ENCODE measurements at regions of chr9 and their contacts with region 1.

Region 1: DNA sequence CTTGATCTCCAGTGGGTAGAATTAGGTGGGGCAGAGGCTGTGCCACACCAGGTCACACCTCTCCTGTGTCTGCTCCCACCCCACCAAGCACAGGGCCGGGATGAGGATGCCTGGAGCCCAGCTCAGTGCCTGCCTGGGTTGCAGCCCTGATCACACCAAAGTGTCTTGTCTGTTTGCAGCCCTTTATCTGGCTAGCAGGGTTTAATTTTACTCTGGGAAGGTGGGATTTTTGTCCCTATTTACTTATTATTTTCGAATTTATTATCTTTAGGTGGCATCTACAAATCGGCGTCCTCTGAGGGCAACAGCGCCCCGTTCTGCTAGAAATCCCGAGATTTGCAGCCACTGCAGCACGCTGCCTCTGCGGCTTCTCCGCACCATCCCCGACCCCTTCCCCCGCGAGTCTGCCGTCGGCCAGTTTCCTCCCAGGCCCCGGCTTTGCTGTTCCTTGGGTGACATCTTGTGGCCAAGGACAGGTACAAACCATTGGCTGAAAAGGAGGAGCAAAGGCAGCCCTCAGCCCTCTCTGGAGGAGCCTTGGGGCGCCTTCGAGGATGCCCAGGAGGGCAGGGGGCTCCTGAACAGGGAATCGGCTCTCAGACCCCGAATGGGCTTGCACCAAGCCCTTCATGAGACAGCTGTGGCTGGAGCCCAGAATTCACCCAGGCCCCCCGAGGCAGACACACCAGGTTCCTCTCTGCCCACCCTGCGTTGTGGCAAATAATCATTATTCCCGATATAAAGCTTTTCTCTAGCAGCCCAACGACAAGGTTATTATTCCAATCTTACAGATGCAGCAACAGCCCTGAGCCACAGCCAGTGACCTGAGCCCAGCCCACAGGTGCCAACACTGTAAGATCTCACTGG is 113.0 kb downstream of the GAPVD1 start:
- DNase-seq: peak; percentile 88
- CTCF ChIP-seq: peak; percentile 83

Region 2: DNA sequence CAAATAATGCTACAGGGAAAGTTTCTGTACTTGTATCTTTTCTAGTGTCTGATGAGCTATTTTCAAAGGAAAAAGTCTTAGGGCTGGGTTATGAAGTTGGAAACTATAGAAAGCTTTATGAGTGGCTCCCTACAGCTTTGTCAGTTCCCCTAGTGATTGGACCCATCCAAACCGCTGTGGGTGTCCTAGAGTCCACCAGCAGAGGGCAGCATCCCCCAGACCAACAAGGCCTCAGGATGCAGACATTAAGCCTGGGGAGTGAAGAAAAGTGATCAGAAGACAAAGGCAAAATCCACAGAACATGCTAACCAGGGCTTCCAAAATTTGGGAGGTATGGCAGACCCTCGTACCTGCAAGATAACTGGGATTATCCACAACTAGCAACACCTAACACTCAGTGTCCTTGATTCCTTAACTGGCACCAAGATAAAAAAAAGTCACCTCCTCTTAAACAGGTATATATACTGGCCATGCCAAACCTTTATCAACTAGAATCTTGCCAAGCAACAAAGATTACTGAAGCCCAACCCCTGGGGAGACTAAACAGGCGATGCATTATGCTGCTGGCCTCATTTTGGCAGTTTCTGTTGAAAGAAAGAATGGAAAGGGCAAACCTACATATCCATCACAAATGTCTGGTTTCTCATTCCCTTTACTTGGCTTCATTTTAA is 757.1 kb before region 1 on chr9:
- in situ Hi-C with region 1: loop called (anchors 10 kb)
- DNase-seq: peak; percentile 65
- CTCF ChIP-seq: peak; percentile 94

Region 3: DNA sequence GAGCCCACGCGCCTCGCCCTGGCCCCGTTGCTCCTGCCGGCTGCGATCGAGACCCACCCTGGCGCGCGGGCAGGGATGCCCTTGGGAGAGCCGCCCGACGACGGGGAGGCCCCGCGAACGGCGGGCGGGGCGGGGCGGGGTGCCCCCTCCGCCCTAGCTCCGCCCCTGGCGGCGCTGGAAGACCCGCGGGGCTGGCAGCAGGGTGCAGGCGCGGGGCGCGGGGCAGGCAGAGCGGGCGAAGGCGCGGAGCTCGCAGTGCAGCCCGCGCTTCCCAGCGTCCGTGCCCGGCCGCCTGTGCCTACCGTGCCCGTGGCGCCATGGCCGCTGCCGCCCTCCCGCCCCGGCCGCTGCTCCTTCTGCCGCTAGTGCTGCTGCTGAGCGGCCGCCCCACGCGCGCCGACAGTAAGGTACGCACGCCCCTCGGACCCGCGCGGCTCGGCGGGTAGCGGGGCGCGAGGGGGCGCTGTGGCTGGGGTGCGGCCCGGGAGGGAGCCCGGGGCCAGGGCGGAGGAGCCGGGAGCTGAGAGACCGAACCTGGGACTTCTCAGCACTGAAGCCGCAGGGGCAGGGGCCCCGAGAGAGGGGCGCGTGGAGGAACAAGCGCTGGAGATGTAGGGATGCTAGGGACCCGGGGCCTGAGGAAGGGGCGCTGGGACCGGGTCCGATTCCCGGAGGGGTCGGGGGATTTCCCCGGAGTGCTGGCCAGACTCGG is 597.6 kb before region 1 on chr9 and contains the start of gene OLFML2A:
- in situ Hi-C with region 1: loop called (anchors 25 kb)
- DNase-seq: peak; percentile 68
- CTCF ChIP-seq: peak; percentile 64

Region 4: DNA sequence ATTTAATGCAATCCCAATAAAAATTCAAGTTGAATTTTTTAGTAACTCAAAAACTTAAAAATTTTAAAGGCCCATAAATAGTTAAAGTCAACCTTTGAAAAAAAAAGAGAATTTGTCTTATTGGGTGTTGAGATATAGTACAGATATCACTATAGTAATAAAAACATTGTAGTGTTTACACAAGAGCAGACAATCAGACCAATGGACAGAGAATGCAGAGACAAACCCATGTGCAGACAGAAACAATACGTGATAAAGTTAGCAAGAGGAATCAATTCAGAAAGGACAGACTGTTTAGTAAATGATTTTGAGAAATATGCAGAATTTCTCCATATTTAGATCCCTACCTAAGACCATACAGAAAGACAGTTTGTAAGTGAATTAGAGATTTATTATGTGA is 467.7 kb before region 1 on chr9:
- in situ Hi-C with region 1: loop called (anchors 25 kb)
- DNase-seq: no peak
- CTCF ChIP-seq: no peak

Measured in GM13977 (cell line).